Left lung (tissue), 14 donors: ENCODE measurements at regions of chr3 and their contacts with region 1.

Region 1: DNA sequence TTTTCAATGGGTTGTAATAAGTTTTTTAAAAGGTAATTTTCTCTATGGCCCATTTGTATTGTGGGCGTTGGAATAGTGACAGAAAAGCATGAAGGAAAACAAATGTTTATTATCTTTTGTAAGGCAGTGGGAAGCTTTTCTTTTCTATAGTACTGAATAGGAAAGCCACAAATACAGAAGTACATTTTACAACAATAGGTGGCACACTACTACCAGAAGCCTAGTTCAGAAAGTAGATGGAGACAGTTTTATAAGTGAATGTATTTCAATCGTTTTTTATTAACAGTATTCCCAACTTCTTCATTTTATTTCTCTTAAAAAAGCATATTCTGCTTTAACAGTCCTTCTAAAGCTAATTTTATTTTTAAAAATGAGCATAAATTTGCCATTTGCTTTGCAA is 296.7 kb downstream of the PTPRG start:
- DNase-seq: peak in 1 of 4 donors; percentile 30
- ATAC-seq: peak; percentile 77
- H3K4me3 ChIP-seq: no peak overlapping the region
- H3K27ac ChIP-seq: no peak overlapping the region
- H3K4me1 ChIP-seq: peaks cover 0 to 12% of the 10 kb centered on the region in 2 donors
- H3K27me3 ChIP-seq: no peaks in the 10 kb centered on the region
- CTCF ChIP-seq: peak in 1 of 2 donors; percentile 33

Region 2: GRCh38 chr3:61561374-61562041 is 296.5 kb before region 1 on chr3 and contains the start of gene PTPRG:
- intact Hi-C with region 1: loop called in 1 of 2 experiments (anchors 10 kb)
- DNase-seq: peak; percentile 85 to 97 (median 90)
- ATAC-seq: peak; percentile 80
- H3K4me3 ChIP-seq: peak within 1 kb of the TSS; percentile 64 to 72
- H3K27ac ChIP-seq: peak within 1 kb of the TSS; percentile 90 to 95
- H3K4me1 ChIP-seq: peaks cover 9 to 28% of the 10 kb centered on the region in 2 donors
- H3K27me3 ChIP-seq: peaks cover 0 to 70% of the 10 kb centered on the region in 2 donors
- CTCF ChIP-seq: no peak
- polyA plus RNA-seq, gene PTPRG: 50.9 to 65.1 (median 53.5) TPM

Region 3: GRCh38 chr3:62188681-62189383 is 330.8 kb after region 1 on chr3:
- intact Hi-C with region 1: loop called in 1 of 2 experiments (anchors 5 kb)
- DNase-seq: peak in 3 of 4 donors; percentile 51 to 85 (median 75)
- ATAC-seq: peak; percentile 89
- H3K4me3 ChIP-seq: no peak overlapping the region
- H3K27ac ChIP-seq: no peak overlapping the region
- H3K4me1 ChIP-seq: peaks cover 0 to 10% of the 10 kb centered on the region in 2 donors
- H3K27me3 ChIP-seq: no peaks in the 10 kb centered on the region
- CTCF ChIP-seq: peak; percentile 76 to 82

Region 4: DNA sequence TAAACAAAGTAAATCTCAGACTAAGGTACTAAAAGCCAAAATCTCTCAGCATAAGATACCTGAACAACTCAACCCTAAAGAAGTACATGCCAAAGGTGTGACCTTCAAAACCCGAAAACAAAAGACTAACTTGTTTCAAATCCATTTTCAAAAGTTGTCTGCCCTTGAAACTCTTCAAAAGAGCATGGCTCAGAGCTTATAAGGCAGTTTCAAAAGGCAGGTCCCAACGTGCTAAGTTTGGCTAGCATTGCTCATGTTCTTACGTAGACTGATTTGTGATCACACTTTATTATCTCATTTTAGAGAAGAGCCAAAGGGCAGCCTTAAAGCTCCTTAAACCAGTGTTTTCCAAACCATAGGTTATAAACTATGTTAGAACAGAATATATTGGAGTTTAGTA is 403.1 kb after region 1 on chr3:
- intact Hi-C with region 1: no loop called
- DNase-seq: no peak
- ATAC-seq: no peak
- H3K4me3 ChIP-seq: no peak overlapping the region
- H3K27ac ChIP-seq: no peak overlapping the region
- H3K4me1 ChIP-seq: no peaks in the 10 kb centered on the region
- H3K27me3 ChIP-seq: no peaks in the 10 kb centered on the region
- CTCF ChIP-seq: no peak